B cell (primary cell): ENCODE measurements at regions of chr6 and their contacts with region 1.

Region 1: DNA sequence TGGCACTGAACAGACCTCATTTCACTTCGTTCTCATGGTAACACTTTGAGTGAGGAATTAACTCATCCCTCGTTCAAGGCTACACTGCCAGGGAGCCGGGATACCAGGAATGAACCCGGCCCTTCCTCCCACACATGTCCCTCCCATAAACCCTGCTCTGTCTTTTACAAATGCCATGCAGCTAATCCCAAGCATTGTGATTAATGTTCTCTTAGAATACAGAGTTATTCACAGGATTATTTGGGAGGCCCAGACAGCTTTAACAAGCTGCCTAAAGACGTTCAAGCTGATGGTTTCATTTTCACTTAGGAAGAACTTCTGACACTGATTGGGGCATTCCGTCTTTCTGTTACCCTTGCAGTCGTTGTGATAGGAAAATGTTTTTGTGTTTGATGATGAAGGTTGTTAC is 42.5 kb upstream of the CD83 start:
- DNase-seq: peak; percentile 84
- ATAC-seq: peak; percentile 79
- H3K4me3 ChIP-seq: peak overlapping the region in 4 of 5 experiments; percentile 24 to 69 (median 42)
- H3K4me3 Mint-ChIP-seq: peak overlapping the region; percentile 88
- H3K27ac ChIP-seq: peak overlapping the region; percentile 88 to 96
- H3K27ac Mint-ChIP-seq: peak overlapping the region; percentile 95
- H3K4me1 ChIP-seq: peaks cover 24 to 27% of the 10 kb centered on the region in 2 donors
- H3K4me1 Mint-ChIP-seq: peaks cover 57% of the 10 kb centered on the region
- H3K27me3 ChIP-seq: no peaks in the 10 kb centered on the region
- H3K27me3 Mint-ChIP-seq: no peaks in the 10 kb centered on the region
- CTCF ChIP-seq: no peak

Region 2: GRCh38 chr6:13992417-13993055 is 82.6 kb before region 1 on chr6:
- CTCF ChIA-PET with region 1: no interaction called
- POLR2A ChIA-PET with region 1: no interaction called
- intact Hi-C with region 1: no loop called
- DNase-seq: no peak
- ATAC-seq: no peak
- H3K4me3 ChIP-seq: no peak overlapping the region
- H3K4me3 Mint-ChIP-seq: no peak overlapping the region
- H3K27ac ChIP-seq: no peak overlapping the region
- H3K27ac Mint-ChIP-seq: no peak overlapping the region
- H3K4me1 ChIP-seq: no peaks in the 10 kb centered on the region
- H3K4me1 Mint-ChIP-seq: no peaks in the 10 kb centered on the region
- H3K27me3 ChIP-seq: peaks cover 0 to 3% (median 0%) of the 10 kb centered on the region in 4 experiments
- H3K27me3 Mint-ChIP-seq: peaks cover 41% of the 10 kb centered on the region
- CTCF ChIP-seq: no peak

Region 3: DNA sequence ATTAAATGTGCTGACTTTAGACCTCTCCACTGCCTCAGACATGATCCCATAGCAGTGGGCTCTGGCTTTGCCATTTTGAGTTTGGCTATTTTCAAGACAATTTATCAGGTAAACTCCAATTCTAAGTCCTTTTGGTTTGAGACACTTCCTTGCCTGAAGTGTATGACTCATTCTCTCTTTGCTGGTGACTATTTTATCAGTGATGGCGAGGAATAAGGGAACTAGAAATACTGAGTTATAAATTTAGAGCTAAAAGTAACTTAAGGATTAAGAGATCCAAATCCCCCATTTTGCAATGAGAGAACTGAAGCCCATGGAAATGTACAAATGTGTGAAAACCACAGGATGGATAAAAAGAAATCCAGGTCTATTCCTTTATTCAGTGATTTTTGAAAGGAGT is 11.6 kb after region 1 on chr6:
- CTCF ChIA-PET with region 1: interaction called, 4 read pairs
- POLR2A ChIA-PET with region 1: interaction called, 6 read pairs
- intact Hi-C with region 1: loop called (anchors 1 kb)
- DNase-seq: no peak
- ATAC-seq: no peak
- H3K4me3 ChIP-seq: no peak overlapping the region
- H3K4me3 Mint-ChIP-seq: no peak overlapping the region
- H3K27ac ChIP-seq: no peak overlapping the region
- H3K27ac Mint-ChIP-seq: peak overlapping the region; percentile 1
- H3K4me1 ChIP-seq: peaks cover 64 to 71% of the 10 kb centered on the region in 2 donors
- H3K4me1 Mint-ChIP-seq: peaks cover 80% of the 10 kb centered on the region
- H3K27me3 ChIP-seq: no peaks in the 10 kb centered on the region
- H3K27me3 Mint-ChIP-seq: no peaks in the 10 kb centered on the region
- CTCF ChIP-seq: no peak

Region 4: DNA sequence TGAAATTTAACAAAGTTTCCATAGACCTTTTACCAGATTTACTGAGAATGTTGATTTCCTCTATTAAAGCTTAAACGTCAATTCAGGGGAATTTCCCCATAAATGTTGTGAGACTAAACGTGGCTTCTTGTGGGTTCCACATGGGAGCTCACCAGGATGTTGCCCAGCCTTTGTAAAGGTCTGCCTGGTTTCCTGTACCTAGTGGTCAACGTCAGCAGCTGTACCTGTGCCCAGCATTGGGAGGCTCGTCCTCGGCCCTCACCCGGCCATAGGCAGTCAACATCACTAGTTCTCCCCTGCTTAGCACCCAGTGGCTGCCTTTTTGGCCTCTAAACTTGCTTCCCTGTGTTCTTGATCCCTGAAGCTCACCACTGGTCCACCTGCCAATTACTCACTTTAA is 20.3 kb after region 1 on chr6:
- CTCF ChIA-PET with region 1: interaction called, 26 read pairs
- POLR2A ChIA-PET with region 1: interaction called, 17 read pairs
- intact Hi-C with region 1: loop called (anchors 1 kb)
- DNase-seq: peak; percentile 95
- ATAC-seq: peak; percentile 77
- H3K4me3 ChIP-seq: peak overlapping the region in 2 of 5 experiments; percentile 18 to 57
- H3K4me3 Mint-ChIP-seq: peak overlapping the region; percentile 81
- H3K27ac ChIP-seq: peak overlapping the region; percentile 98 to 100
- H3K27ac Mint-ChIP-seq: peak overlapping the region; percentile 99
- H3K4me1 ChIP-seq: peaks cover 86 to 90% of the 10 kb centered on the region in 2 donors
- H3K4me1 Mint-ChIP-seq: peaks cover 88% of the 10 kb centered on the region
- H3K27me3 ChIP-seq: no peaks in the 10 kb centered on the region
- H3K27me3 Mint-ChIP-seq: no peaks in the 10 kb centered on the region
- CTCF ChIP-seq: no peak

Region 5: GRCh38 chr6:14108571-14109410 is 33.7 kb after region 1 on chr6:
- CTCF ChIA-PET with region 1: interaction called, 11 read pairs
- POLR2A ChIA-PET with region 1: interaction called, 7 read pairs
- intact Hi-C with region 1: loop called (anchors 1 kb)
- DNase-seq: peak; percentile 95
- ATAC-seq: peak; percentile 81
- H3K4me3 ChIP-seq: peak overlapping the region in 3 of 5 experiments; percentile 26 to 55 (median 40)
- H3K4me3 Mint-ChIP-seq: peak overlapping the region; percentile 85
- H3K27ac ChIP-seq: peak overlapping the region; percentile 93 to 99
- H3K27ac Mint-ChIP-seq: peak overlapping the region; percentile 96
- H3K4me1 ChIP-seq: peaks cover 45 to 50% of the 10 kb centered on the region in 2 donors
- H3K4me1 Mint-ChIP-seq: peaks cover 64% of the 10 kb centered on the region
- H3K27me3 ChIP-seq: no peaks in the 10 kb centered on the region
- H3K27me3 Mint-ChIP-seq: no peaks in the 10 kb centered on the region
- CTCF ChIP-seq: no peak

Region 6: DNA sequence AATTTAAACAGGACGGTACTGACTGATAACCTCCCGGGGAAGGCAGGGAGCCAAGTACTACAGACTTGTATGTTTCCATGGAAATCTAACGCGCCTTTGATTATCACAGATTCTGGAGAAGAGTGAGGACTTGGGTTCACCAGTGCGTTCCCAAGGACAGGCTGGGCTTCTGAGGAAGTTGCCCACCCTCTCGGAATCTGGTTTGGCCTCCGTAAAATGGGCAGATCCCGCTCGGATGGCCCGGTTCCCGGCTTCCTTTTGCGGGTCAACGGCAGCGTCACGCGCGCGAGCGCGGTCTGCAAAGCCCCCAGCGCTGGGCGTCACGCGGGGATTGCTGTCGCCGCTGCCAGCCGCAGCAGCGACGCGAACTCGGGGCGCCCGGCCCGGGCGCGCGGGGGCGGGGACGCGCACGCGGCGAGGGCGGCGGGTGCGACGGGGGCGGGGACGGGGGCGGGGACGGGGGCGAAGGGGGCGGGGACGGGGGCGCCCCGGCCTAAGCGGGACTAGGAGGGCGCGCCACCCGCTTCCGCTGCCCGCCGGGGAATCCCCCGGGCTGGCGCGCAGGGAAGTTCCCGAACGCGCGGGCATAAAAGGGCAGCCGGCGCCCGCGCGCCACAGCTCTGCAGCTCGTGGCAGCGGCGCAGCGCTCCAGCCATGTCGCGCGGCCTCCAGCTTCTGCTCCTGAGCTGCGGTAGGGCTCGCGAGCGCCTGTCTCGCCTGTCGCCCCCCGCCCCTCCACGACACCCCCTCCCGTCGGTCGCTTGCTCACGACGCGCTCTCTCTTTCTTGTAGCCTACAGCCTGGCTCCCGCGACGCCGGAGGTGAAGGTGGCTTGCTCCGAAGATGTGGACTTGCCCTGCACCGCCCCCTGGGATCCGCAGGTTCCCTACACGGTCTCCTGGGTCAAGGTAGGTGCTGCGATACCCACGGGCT is 42.3 kb after region 1 on chr6 and contains the start of gene CD83:
- CTCF ChIA-PET with region 1: no interaction called
- POLR2A ChIA-PET with region 1: interaction called, 15 read pairs
- intact Hi-C with region 1: loop called (anchors 2 kb)
- DNase-seq: peak; percentile 97
- ATAC-seq: peak; percentile 80
- H3K4me3 ChIP-seq: peak within 1 kb of the TSS; percentile 75 to 100 (median 94)
- H3K4me3 Mint-ChIP-seq: peak within 1 kb of the TSS; percentile 93
- H3K27ac ChIP-seq: peak within 1 kb of the TSS; percentile 99
- H3K27ac Mint-ChIP-seq: peak within 1 kb of the TSS; percentile 97
- H3K4me1 ChIP-seq: peaks cover 37 to 44% of the 10 kb centered on the region in 2 donors
- H3K4me1 Mint-ChIP-seq: peaks cover 37% of the 10 kb centered on the region
- H3K27me3 ChIP-seq: no peaks in the 10 kb centered on the region
- H3K27me3 Mint-ChIP-seq: no peaks in the 10 kb centered on the region
- CTCF ChIP-seq: no peak
- total RNA-seq, gene CD83: 332 and 339 TPM in 2 replicates